Panc1 (cell line): ENCODE measurements at regions of chr16 and their contacts with region 1.

Region 1: DNA sequence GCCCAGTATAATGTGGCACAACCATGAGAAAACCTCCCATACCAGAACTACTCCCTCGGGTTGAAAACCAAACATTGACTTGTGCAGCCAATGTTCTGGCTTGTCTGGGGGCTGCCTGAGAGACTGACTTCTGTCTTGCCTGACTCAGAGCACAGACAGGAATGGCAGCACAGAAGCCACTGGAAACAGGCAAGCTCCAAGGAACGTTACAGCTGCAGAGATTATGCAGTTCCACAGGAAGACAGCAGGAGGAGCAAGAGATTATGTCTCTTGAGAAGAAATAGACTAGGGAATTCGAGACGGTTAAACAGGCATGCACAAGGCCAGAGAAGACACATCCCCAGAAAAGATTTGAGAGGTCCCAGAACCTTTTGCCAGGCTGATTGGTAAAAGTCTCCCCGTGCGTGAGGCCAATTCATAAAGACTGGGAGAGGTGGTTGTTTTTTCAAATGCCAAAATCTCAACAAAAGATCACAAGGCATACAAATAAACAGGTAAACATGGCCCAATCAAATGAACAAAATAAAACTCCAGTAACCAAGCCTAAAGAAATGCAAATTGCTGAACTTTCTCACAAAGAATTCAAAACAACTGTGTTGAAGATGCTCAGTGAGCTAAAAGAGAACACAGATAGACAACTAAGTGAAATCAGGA is 90.6 kb upstream of the CDH5 start:
- DNase-seq: peak; percentile 32
- ATAC-seq: peak; percentile 77
- H3K4me3 ChIP-seq: no peak overlapping the region
- H3K27ac ChIP-seq: no peak overlapping the region
- H3K4me1 ChIP-seq: no peaks in the 10 kb centered on the region
- H3K27me3 ChIP-seq: no peaks in the 10 kb centered on the region
- CTCF ChIP-seq: peak; percentile 71

Region 2: DNA sequence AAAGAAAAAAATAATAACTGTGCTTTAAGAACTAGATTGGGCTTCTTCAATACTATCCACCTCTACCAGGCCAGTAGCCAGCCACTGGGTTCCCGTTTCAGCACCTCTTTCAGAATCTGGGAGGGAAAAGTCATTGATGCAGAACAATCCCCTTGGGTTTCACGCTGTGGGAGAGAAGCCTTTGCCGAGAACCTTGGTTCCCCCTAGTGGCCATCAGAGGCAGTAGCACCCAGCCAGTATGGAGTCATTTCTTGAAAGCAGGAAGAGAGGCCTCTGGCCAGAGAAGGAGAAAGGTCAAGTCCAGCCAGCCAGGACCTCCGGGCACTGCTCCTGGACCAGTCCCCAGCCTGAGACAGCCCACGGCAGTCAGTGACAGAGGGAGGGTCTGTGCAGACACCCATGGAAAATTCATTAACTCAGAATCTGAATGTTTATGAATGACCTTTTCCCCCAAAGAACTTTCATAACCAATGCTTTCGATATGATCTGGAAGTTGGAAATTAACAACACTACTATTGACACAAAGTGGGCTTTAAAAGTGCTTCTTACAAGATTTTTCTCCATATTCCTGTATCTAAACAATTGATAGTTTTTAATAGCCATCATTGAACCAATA is 39.4 kb after region 1 on chr16:
- CTCF ChIA-PET with region 1: no interaction called
- POLR2A ChIA-PET with region 1: no interaction called
- in situ Hi-C with region 1: no loop called
- intact Hi-C with region 1: loop called (anchors 1 kb)
- DNase-seq: peak; percentile 47
- ATAC-seq: peak; percentile 93
- H3K4me3 ChIP-seq: no peak overlapping the region
- H3K27ac ChIP-seq: no peak overlapping the region
- H3K4me1 ChIP-seq: no peaks in the 10 kb centered on the region
- H3K27me3 ChIP-seq: no peaks in the 10 kb centered on the region
- CTCF ChIP-seq: peak; percentile 93

Region 3: GRCh38 chr16:66344533-66345145 is 68.7 kb after region 1 on chr16:
- CTCF ChIA-PET with region 1: no interaction called
- POLR2A ChIA-PET with region 1: no interaction called
- in situ Hi-C with region 1: no loop called
- intact Hi-C with region 1: no loop called
- DNase-seq: no peak
- ATAC-seq: no peak
- H3K4me3 ChIP-seq: no peak overlapping the region
- H3K27ac ChIP-seq: no peak overlapping the region
- H3K4me1 ChIP-seq: no peaks in the 10 kb centered on the region
- H3K27me3 ChIP-seq: no peaks in the 10 kb centered on the region; the same call in 1 of the 2 replicates
- CTCF ChIP-seq: peak; percentile 80